GM13977 (cell line): ENCODE measurements at regions of chr2 and their contacts with region 1.

Region 1: GRCh38 chr2:118882709-118883210 is 35.3 kb upstream of the EN1 start:
- DNase-seq: peak; percentile 62
- CTCF ChIP-seq: peak; percentile 94

Region 2: GRCh38 chr2:118661179-118661578 is 221.6 kb before region 1 on chr2:
- in situ Hi-C with region 1: no loop called
- DNase-seq: no peak
- CTCF ChIP-seq: no peak

Region 3: DNA sequence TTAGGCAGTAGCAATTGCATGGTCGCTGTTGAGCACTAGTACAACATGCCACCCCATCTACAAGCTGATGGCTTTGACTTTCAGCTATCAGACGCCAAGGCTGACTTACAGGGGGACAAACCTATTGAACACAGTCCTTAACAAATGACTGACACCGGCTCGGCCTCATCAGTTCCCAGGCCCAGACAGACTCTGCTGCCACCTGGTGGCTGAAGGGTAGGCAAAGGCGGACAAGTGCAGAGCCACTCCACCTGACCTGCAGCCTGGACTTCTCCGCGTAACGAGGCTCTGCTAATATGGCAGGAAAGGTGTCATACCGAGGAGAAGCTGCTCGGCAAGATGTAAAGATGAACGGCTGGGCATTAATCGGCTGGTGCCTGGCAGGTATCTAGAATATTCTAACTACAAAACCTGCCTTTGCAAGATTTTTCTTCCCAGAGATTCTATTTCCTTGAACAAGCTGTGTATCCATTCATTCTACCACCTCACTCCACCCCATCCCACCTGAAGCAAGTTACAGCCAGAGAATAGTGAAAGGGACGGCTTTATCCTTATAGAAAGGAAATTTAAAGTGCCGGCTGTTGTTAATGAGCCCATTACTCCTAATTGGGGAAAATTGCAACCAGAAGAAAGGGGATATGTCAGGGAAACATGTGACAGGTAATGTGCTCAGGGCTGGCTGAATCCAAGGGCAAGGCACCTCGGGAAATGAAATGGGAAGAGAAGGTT is 408.3 kb after region 1 on chr2:
- in situ Hi-C with region 1: loop called (anchors 25 kb)
- DNase-seq: peak; percentile 80
- CTCF ChIP-seq: peak; percentile 80